HEK293T (cell line): ENCODE measurements at regions of chr2 and their contacts with region 1.

Region 1: DNA sequence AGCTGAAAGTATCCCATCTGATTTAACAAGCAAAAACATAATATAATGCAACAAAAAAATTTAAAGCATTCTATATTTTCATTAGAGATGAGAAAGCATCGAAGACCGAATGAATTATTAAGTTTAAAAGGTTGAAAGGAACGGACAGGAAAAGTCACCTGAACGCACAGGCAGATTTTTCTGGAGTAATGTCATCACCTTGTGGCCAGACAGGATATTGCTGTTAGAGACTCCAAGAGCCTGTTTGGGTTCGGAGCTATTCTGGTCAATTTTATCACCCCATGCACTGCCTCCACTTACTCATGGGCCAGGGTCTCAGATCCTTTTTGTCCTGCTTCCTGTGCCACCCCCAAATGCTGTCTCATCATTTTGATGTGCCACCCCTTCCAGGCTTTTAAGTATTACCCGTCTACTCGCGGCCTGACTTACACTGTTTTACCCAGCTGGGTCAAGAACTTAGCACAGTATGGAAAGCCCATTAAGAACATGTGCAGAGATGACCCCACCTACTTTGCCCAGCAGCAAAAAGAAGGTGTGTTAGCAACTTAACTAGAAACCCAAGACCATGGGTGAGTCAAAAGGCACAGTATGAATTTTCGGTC is 27.3 kb downstream of the GKN2 start:
- DNase-seq: peak; percentile 65

Region 2: GRCh38 chr2:68709421-68709911 is 215.9 kb before region 1 on chr2:
- CTCF ChIA-PET with region 1: interaction called, 27 read pairs
- POLR2A ChIA-PET with region 1: no interaction called
- DNase-seq: peak; percentile 67

Region 3: GRCh38 chr2:68751397-68752339 is 173.7 kb before region 1 on chr2:
- CTCF ChIA-PET with region 1: interaction called, 14 read pairs
- POLR2A ChIA-PET with region 1: no interaction called
- DNase-seq: peak; percentile 85

Region 4: DNA sequence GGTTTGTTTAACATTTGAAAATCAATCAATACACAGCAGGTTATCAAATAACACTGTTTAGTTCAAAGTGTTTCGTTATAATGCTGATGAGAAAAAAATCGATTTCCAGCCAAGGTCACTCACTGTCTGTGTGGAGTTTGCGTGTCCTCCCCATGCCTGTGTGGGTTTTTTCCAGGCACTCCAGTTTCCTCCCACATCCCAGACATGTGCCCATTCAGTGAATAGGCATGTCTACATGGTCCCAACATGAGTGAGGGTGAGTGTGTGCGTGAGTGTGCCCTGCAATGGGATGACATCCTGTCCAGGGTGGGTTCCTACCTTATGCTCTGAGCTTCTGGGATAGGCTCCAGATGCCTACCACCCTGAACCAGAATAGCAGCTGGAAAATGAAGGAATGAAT is 36.0 kb after region 1 on chr2:
- CTCF ChIA-PET with region 1: interaction called, 13 read pairs
- POLR2A ChIA-PET with region 1: no interaction called
- DNase-seq: no peak

Region 5: GRCh38 chr2:69164061-69164778 is 238.8 kb after region 1 on chr2:
- CTCF ChIA-PET with region 1: no interaction called
- POLR2A ChIA-PET with region 1: no interaction called
- DNase-seq: no peak